Left lung (tissue), 14 donors: ENCODE measurements at regions of chr20 and their contacts with region 1.

Region 1: DNA sequence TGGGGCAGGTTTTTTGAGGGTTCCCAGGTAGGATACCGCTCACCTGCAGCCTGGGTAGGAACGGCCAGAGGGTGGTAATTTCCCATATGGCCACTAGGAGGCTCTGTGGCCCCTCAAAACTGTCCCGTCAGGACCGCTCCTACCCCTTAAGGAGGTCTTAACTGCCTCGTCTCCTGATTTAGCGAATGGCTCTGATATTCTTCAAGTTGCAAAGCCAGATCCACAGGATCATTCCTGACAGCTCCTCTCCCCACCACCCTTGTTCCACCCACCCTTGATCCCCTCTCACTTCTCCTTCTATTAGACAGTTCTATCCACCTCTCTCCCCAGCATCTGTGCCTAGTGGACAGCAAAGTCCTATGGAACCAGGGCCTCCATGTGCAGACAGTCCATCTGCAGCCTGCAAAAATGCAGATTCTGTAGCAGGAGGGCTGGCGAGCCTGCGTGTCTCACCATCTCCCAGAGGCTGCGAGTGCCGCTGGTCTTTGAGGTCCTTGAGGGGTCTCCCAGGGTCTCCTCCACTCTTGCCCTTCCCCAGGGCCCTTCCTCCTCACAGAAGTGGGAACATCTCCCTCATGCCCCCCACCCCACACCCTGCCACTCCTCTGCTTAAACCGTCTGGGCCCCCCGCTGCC is 34.3 kb upstream of the ZBP1 start:
- DNase-seq: peak in 3 of 4 donors; percentile 34 to 78 (median 56)
- ATAC-seq: peak; percentile 82
- H3K4me3 ChIP-seq: no peak overlapping the region
- H3K27ac ChIP-seq: no peak overlapping the region
- H3K4me1 ChIP-seq: no peaks in the 10 kb centered on the region
- H3K27me3 ChIP-seq: no peaks in the 10 kb centered on the region
- CTCF ChIP-seq: peak; percentile 88 to 96

Region 2: DNA sequence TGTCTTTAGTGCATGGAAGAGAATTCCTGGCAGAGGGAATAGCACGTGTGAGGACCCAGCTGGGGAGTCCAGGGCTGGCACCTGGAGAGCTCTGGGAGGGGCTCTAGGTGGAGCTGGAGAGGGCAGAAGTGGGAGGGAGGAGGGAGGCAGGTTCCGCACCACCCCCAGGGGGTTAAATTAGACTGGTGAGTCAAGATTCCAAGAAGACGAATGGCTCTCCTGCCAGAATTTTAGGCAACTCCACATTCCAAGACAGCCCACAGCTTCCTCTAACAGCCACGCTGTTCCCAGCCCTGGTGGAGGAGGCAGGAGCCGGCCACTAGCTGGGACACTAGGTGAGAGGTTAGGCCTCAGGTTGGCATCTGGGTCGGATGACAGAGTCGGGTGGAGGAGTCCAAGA is 965.2 kb before region 1 on chr20:
- intact Hi-C with region 1: no loop called
- DNase-seq: peak in 1 of 4 donors; percentile 36
- ATAC-seq: peak; percentile 76
- H3K4me3 ChIP-seq: no peak overlapping the region
- H3K27ac ChIP-seq: no peak overlapping the region
- H3K4me1 ChIP-seq: no peaks in the 10 kb centered on the region
- H3K27me3 ChIP-seq: peaks cover 0 to 68% of the 10 kb centered on the region in 2 donors
- CTCF ChIP-seq: no peak

Region 3: GRCh38 chr20:57526087-57526884 is 128.2 kb before region 1 on chr20:
- intact Hi-C with region 1: no loop called
- DNase-seq: no peak
- ATAC-seq: no peak
- H3K4me3 ChIP-seq: no peak overlapping the region
- H3K27ac ChIP-seq: no peak overlapping the region
- H3K4me1 ChIP-seq: no peaks in the 10 kb centered on the region
- H3K27me3 ChIP-seq: no peaks in the 10 kb centered on the region
- CTCF ChIP-seq: no peak

Region 4: GRCh38 chr20:57738481-57738880 is 84.0 kb after region 1 on chr20:
- intact Hi-C with region 1: no loop called
- DNase-seq: no peak
- ATAC-seq: no peak
- H3K4me3 ChIP-seq: no peak overlapping the region
- H3K27ac ChIP-seq: no peak overlapping the region
- H3K4me1 ChIP-seq: no peaks in the 10 kb centered on the region
- H3K27me3 ChIP-seq: no peaks in the 10 kb centered on the region
- CTCF ChIP-seq: no peak

Region 5: DNA sequence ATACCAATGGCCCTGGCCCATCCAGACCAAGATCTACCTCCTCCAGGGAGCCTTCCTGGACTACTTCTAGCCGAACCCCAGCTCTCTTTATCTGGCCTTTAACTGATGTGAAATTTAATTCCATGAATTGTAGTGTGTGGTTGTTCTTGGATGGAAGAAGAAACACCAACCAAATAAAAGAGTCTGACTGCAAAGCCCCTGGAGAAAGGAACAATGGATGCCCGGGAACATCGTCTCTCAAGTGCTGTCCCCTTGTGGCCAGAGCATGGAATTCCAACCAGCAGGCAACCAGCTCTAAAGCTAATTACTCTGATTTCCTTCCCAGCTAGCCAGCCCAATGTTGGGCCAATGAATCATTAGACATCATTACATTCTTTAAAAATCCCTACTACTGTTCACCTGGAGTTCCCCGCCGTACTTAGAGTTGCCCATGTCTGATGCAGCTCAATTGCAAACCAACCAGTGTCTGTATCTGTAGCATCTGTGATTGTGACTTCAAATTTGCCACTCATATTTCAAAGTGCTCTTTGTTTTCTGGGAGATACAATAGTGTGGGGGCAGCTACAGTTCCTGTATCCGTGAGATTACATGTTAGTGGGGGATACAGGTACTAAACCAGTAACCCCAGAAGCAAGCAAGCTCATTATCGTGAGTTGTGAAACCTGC is 432.8 kb after region 1 on chr20:
- intact Hi-C with region 1: loop called in 1 of 2 experiments (anchors 10 kb)
- DNase-seq: peak in 2 of 4 donors; percentile 15 to 51
- ATAC-seq: peak; percentile 80
- H3K4me3 ChIP-seq: no peak overlapping the region
- H3K27ac ChIP-seq: no peak overlapping the region
- H3K4me1 ChIP-seq: no peaks in the 10 kb centered on the region
- H3K27me3 ChIP-seq: no peaks in the 10 kb centered on the region
- CTCF ChIP-seq: peak; percentile 72 to 87

Region 6: DNA sequence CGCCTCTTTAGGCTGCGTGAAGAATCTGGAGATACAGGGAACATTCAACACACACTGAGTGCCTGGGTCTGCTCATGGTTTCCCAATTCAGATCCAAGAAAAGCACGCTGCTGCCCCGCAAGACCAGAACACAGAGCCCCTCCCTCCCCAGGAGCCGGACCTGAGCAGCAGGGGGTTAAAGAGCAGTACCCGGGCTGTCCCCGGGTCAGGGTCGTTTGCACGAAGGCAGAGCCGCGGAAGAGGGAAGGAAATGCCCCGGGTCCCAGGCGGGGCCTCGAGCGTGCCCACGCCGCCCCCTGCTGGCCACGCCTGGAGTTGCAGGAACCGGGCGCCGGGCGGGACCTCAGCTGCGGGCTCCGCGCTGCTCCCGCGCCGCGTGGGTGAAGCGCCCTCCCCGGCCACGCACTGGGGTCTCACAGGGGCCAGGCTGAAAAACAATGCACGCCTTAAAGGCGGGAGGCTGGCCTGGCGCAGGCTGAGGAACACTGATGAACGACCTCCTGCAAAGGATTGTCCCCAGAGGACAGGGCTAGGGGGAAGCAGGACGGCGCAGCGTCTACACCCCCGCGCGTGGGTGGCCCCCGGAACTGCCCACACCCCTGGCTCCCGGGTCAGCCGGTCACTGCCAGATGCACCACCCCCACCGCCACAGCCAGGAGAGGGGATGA is 525.1 kb after region 1 on chr20:
- intact Hi-C with region 1: loop called in 1 of 2 experiments (anchors 5 kb)
- DNase-seq: peak; percentile 45 to 91 (median 66)
- ATAC-seq: peak; percentile 96
- H3K4me3 ChIP-seq: peak overlapping the region in 1 of 2 donors; percentile 6
- H3K27ac ChIP-seq: no peak overlapping the region
- H3K4me1 ChIP-seq: peaks cover 8 to 9% of the 10 kb centered on the region in 2 donors
- H3K27me3 ChIP-seq: peaks cover 7 to 31% of the 10 kb centered on the region in 2 donors
- CTCF ChIP-seq: peak; percentile 99

Region 7: GRCh38 chr20:58388882-58389323 is 734.4 kb after region 1 on chr20 and contains the start of gene VAPB:
- intact Hi-C with region 1: no loop called
- DNase-seq: peak; percentile 92 to 99 (median 97)
- ATAC-seq: peak; percentile 99
- H3K4me3 ChIP-seq: peak within 1 kb of the TSS; percentile 73 to 90
- H3K27ac ChIP-seq: peak within 1 kb of the TSS; percentile 88 to 90
- H3K4me1 ChIP-seq: peaks cover 17 to 44% of the 10 kb centered on the region in 2 donors
- H3K27me3 ChIP-seq: no peaks in the 10 kb centered on the region
- CTCF ChIP-seq: no peak
- polyA plus RNA-seq, gene VAPB: 36.3 to 48.8 (median 42.3) TPM